ENCODE measurements at regions of chr11 and their contacts with region 1.

Region 1: GRCh38 chr11:66299186-66299585 is 7.5 kb downstream of the TMEM151A start:
- DNase-seq: no peak

Region 2: DNA sequence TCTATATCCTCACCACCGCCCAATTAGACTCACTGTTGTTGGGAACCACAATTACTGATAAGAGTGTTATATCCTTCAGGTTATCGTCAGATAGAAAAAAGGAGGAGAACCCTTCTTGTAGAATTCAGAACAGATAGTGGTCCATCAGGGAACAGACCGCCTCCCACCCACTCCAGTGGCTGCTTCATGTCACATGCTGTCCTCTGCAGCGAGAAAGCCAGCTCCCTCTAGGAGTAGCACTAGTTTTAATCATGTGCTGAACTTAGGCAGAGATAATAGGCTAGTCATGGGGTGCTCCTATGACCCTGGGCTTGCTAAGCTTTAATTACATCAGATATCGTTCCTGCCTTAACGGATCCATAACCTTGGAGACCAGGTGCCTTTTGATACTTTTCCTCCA is 82.3 kb before region 1 on chr11:
- intact Hi-C with region 1: no loop called
- DNase-seq: peak; percentile 43

Region 3: DNA sequence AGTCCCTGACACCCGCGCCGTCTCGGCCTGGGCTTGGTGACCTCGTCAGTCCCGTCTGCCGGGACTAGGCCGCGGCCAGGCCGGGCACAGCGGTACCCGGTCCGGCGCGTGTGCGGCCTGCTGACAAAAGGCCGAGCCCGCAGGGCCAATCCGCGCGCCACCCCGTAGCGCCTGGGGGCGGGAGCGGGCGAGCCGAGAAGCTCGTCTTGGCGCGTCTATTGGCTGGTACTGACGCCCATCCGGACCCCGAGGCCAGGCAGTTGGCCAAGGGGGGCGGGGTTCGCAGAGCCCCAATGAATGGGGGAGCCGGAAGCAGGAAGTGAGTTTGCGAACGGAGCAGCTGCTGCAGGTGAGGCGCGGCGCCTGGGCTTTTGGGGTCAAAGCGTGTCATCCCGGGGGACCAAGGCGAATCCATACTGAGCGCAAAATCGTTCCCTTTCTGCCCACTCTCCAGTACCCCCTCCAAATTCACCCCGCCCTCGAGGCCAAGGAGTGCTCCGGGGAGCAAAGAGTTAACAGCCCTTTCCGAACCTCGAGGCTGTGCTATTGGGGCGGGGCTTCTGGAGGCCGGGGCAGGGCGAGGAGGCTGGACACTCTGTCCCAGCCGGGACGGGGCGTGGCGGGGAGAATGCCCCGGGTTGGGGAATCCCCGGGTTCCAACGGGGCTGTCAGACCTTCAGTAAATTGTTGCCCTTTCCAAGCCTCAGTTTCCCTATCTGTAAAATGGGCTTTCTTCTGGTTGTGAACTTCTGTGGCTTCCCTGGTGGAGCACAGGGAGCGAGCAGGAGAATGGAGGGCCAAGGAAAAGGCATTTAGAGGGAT is 181.1 kb after region 1 on chr11 and contains the start of gene DPP3:
- intact Hi-C with region 1: loop called in 1 of 2 experiments (anchors 2 kb)
- DNase-seq: peak; percentile 99
- total RNA-seq, gene DPP3: 27.1 to 29.4 TPM